Psoas muscle (tissue), 8 donors: ENCODE measurements at regions of chr2 and their contacts with region 1.

Region 1: GRCh38 chr2:39513641-39514094 is 76.6 kb upstream of the MAP4K3 start:
- DNase-seq: peak in 1 of 2 donors; percentile 34
- ATAC-seq: peak; percentile 74 to 80 (median 76)
- H3K4me3 ChIP-seq: no peak overlapping the region
- H3K27ac ChIP-seq: peak overlapping the region; percentile 69
- H3K4me1 ChIP-seq: peaks cover 48% of the 10 kb centered on the region
- H3K27me3 ChIP-seq: no peaks in the 10 kb centered on the region
- CTCF ChIP-seq: peak; percentile 54

Region 2: GRCh38 chr2:39379643-39380524 is 133.8 kb before region 1 on chr2:
- intact Hi-C with region 1: loop called in 1 of 2 experiments (anchors 10 kb)
- DNase-seq: no peak
- ATAC-seq: peak; percentile 82 to 90 (median 86)
- H3K4me3 ChIP-seq: peak overlapping the region; percentile 38
- H3K27ac ChIP-seq: peak overlapping the region; percentile 82
- H3K4me1 ChIP-seq: peaks cover 83% of the 10 kb centered on the region
- H3K27me3 ChIP-seq: no peaks in the 10 kb centered on the region
- CTCF ChIP-seq: peak; percentile 64

Region 3: DNA sequence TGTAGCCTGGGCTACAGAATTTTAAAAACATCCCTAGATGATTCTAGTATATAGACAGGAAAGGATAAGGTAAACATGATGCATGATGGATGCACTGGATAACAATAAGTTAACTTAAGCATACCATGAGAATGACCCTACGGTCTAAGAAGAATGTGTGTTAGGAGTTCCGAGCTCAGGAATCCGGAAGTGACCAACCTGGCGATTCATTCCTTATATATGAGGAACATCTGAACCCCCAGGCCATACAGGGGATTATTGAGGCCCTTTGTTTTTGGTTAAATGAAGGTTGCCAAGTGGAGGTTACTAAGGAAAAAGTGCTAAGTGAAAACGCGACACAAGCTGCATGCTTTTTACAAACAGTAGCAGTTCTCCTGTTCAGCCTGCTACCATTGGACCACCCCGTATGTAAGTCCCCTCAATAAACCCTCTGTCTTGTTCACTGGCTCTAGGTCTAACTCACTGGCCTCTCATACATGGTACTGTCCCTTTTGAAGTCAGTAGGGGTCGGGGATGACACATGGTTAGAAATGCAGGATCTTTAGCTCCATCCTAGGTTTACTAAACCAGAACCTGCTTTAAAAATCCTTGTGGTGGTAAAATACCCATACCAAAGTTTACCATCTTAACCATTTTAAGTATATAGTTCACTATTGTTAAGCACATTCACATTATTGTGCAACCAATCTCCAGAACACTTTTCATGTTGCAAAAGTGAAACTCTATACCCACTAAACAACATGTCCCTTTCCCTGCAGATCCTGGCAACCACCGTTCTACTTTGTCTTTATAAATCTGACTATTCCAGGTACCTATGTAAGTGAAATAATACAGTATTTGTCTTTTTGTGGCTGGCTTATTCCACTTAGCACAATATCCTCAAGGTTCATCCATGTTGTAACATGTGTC is 34.4 kb after region 1 on chr2:
- intact Hi-C with region 1: no loop called
- DNase-seq: no peak
- ATAC-seq: peak in 3 of 4 donors; percentile 63 to 85 (median 71)
- H3K4me3 ChIP-seq: no peak overlapping the region
- H3K27ac ChIP-seq: no peak overlapping the region
- H3K4me1 ChIP-seq: no peaks in the 10 kb centered on the region
- H3K27me3 ChIP-seq: no peaks in the 10 kb centered on the region
- CTCF ChIP-seq: no peak

Region 4: DNA sequence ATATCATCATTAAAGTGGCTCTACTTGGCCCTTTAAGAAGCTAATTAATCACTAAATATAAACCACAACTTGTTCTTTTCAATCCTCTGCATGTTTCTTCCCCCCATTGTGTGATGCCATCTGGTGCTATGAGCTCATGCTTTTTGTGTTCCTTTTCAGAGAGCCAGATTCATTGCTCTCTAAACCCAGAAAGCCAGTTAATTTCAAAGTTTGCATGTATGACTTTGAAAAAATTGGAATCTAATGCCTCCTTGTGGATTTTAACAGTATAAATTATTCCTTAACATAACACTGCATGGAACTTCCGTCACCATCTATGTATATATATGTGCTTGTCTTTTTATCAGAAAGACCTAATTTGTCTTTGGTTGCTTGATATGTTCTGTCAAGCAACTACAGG is 183.2 kb after region 1 on chr2:
- intact Hi-C with region 1: loop called (anchors 5 kb)
- DNase-seq: no peak
- ATAC-seq: peak; percentile 21 to 71 (median 44)
- H3K4me3 ChIP-seq: no peak overlapping the region
- H3K27ac ChIP-seq: peak overlapping the region; percentile 65
- H3K4me1 ChIP-seq: peaks cover 30% of the 10 kb centered on the region
- H3K27me3 ChIP-seq: no peaks in the 10 kb centered on the region
- CTCF ChIP-seq: peak; percentile 39

Region 5: GRCh38 chr2:39728941-39729351 is 215.3 kb after region 1 on chr2:
- intact Hi-C with region 1: loop called in 1 of 2 experiments (anchors 10 kb)
- DNase-seq: peak in 1 of 2 donors; percentile 49
- ATAC-seq: peak in 1 of 4 donors; percentile 39
- H3K4me3 ChIP-seq: no peak overlapping the region
- H3K27ac ChIP-seq: no peak overlapping the region
- H3K4me1 ChIP-seq: peaks cover 21% of the 10 kb centered on the region
- H3K27me3 ChIP-seq: no peaks in the 10 kb centered on the region
- CTCF ChIP-seq: peak; percentile 48

Region 6: GRCh38 chr2:39786761-39787518 is 273.3 kb after region 1 on chr2:
- intact Hi-C with region 1: no loop called
- DNase-seq: no peak
- ATAC-seq: no peak
- H3K4me3 ChIP-seq: no peak overlapping the region
- H3K27ac ChIP-seq: no peak overlapping the region
- H3K4me1 ChIP-seq: no peaks in the 10 kb centered on the region
- H3K27me3 ChIP-seq: no peaks in the 10 kb centered on the region
- CTCF ChIP-seq: no peak